Right ventricle myocardium inferior (tissue), 1 donor: ENCODE measurements at regions of chr18 and their contacts with region 1.

Region 1: DNA sequence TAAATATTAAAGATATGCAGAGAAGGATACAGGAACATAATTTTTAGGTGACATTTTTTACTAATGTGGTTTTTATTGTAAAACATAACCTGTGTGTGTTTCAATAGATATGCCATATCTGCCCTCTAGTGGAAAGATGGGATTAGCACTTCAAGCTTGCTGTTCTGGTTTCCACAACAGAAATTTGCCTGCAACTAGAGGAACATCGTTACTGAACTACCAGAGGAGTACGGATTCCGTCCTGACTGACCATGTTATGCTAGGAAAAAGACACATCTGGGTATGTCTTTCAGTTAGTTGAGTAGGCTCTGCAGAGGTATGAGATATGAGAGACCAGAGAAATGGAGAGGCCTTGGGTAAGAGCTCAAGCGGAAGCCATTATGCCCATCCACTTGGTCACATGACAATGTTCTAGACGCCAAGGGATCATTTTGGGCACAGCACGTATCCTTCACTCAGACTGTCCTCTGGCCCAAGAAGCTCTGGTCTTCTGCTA is 104.9 kb downstream of the MBD2 start:
- DNase-seq: no peak
- ATAC-seq: peak; percentile 64

Region 2: GRCh38 chr18:53567929-53568574 is 551.5 kb before region 1 on chr18:
- intact Hi-C with region 1: loop called (anchors 5 kb)
- DNase-seq: no peak
- ATAC-seq: peak; percentile 46

Region 3: GRCh38 chr18:53698907-53699306 is 420.7 kb before region 1 on chr18:
- intact Hi-C with region 1: loop called (anchors 1 kb)
- DNase-seq: no peak
- ATAC-seq: peak; percentile 74